ENCODE measurements at regions of chr7 and their contacts with region 1.

Region 1: DNA sequence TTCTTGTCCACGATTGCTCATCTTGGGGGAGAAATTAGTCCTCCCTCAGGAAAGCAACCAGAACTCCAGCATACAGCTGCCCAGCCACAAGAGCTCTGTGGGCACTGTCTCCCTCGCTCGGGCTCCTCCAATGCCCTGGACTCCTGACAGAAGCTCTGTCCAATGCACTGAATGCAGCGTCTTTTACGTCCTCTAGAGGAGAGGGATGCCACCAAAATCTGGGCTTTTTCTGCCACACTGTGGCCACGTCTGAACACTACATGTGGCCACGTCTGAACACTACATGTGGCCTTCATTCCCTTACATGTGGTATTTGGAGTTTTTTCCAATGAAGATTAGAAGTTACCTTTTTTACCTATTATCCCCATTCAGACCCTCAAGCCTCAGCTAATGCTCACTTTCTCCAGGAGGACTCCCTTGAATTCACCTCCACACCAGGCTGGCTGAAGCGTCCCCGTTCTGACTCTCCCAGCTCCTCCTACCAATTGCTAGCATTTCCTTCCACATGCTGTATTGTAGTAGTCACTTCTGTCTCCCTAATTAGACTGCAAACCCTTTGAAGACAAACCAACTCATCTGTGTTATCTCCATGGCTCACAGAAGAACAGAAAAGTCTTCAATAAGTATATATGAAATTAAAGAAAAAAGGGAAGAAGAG is 134.3 kb upstream of the PDE1C start:
- DNase-seq: peak; percentile 65
- ATAC-seq: peak; percentile 96
- H3K4me3 ChIP-seq: peak overlapping the region; percentile 15 to 23
- H3K27ac ChIP-seq: no peak overlapping the region
- H3K4me1 ChIP-seq: no peaks in the 10 kb centered on the region
- H3K27me3 ChIP-seq: peaks cover 7% of the 10 kb centered on the region
- CTCF ChIP-seq: peak; percentile 81

Region 2: GRCh38 chr7:32070406-32071360 is 133.8 kb before region 1 on chr7 and contains the start of gene PDE1C:
- CTCF ChIA-PET with region 1: no interaction called
- POLR2A ChIA-PET with region 1: no interaction called
- in situ Hi-C with region 1: no loop called
- intact Hi-C with region 1: loop called (anchors 5 kb)
- DNase-seq: no peak
- ATAC-seq: peak; percentile 61
- H3K4me3 ChIP-seq: peak within 1 kb of the TSS; percentile 16 to 33; a peak in 2 of 4 replicates
- H3K27ac ChIP-seq: no peak within 1 kb of the TSS
- H3K4me1 ChIP-seq: no peaks in the 10 kb centered on the region
- H3K27me3 ChIP-seq: peaks cover 30% of the 10 kb centered on the region
- CTCF ChIP-seq: no peak
- total RNA-seq, gene PDE1C: not detected